K562 (cell line): ENCODE measurements at regions of chr2 and their contacts with region 1.

Region 1: DNA sequence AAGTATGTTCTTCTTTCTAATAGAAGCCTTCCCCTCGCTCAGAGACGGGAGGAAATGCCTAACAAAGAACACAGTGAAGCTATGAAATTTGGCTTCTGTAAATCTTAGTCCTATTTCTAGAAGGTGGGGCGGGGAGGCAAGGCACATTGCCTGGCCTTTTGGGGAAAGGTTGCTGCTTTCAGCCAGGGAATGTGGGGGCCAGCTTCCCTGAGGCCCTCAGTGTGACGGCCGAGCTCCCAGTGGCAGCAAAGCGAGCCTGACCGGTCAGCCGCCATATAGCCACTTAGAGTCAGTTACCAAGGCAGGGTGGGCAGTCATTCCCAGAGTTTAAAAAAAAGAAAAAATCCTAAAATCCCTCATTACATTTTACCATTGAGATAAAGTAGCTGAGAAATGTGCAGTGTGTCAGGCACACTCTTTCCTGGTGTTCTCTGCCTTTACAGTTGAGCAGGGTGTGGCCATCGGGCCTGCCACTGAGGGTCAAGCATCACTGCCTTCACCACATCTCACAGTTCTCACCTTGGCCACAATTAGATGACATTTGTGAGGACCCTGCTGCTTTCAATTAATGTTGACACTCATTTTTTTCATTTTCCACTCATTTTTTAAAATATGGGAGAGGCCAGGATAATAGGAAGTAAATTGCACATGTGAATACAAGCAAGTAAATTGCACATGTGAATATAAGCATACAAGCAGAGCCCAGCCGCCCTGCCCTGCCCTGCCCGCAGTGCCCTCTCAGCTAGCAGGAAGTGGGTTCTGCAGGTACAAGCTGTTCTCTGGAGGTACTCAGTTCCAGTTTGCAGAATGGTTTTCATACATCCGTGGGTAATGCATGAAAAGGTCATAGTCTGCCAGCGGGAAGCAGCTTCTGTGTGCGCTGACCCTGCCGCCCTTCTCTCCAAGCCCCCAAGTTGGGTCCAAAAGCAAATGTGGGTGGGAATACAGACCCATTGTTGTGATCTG is 76.9 kb downstream of the WDSUB1 start:
- DNase-seq: no peak
- ATAC-seq: no peak
- H3K4me3 ChIP-seq: no peak overlapping the region
- H3K27ac ChIP-seq: no peak overlapping the region
- H3K4me1 ChIP-seq: no peaks in the 10 kb centered on the region
- H3K27me3 ChIP-seq: peaks cover 34 to 60% of the 10 kb centered on the region in 2 experiments
- CTCF ChIP-seq: no peak
- EP300 ChIP-seq: no peak
- POLR2A ChIP-seq: no peak
- RAD21 ChIP-seq: no peak

Region 2: GRCh38 chr2:159228081-159228581 is 18.5 kb after region 1 on chr2:
- CTCF ChIA-PET with region 1: no interaction called
- POLR2A ChIA-PET with region 1: no interaction called
- in situ Hi-C with region 1: no loop called
- intact Hi-C with region 1: no loop called
- DNase-seq: no peak
- ATAC-seq: no peak
- H3K4me3 ChIP-seq: no peak overlapping the region
- H3K27ac ChIP-seq: no peak overlapping the region
- H3K4me1 ChIP-seq: peaks cover 6 to 7% of the 10 kb centered on the region in 2 experiments
- H3K27me3 ChIP-seq: no peaks in the 10 kb centered on the region
- CTCF ChIP-seq: no peak
- EP300 ChIP-seq: no peak
- POLR2A ChIP-seq: no peak
- RAD21 ChIP-seq: no peak

Region 3: GRCh38 chr2:159256159-159256558 is 46.5 kb after region 1 on chr2:
- CTCF ChIA-PET with region 1: no interaction called
- POLR2A ChIA-PET with region 1: no interaction called
- in situ Hi-C with region 1: no loop called
- intact Hi-C with region 1: no loop called
- DNase-seq: no peak
- ATAC-seq: no peak
- H3K4me3 ChIP-seq: no peak overlapping the region
- H3K27ac ChIP-seq: no peak overlapping the region
- H3K4me1 ChIP-seq: no peaks in the 10 kb centered on the region
- H3K27me3 ChIP-seq: no peaks in the 10 kb centered on the region
- CTCF ChIP-seq: no peak
- EP300 ChIP-seq: no peak
- POLR2A ChIP-seq: no peak
- RAD21 ChIP-seq: no peak

Region 4: DNA sequence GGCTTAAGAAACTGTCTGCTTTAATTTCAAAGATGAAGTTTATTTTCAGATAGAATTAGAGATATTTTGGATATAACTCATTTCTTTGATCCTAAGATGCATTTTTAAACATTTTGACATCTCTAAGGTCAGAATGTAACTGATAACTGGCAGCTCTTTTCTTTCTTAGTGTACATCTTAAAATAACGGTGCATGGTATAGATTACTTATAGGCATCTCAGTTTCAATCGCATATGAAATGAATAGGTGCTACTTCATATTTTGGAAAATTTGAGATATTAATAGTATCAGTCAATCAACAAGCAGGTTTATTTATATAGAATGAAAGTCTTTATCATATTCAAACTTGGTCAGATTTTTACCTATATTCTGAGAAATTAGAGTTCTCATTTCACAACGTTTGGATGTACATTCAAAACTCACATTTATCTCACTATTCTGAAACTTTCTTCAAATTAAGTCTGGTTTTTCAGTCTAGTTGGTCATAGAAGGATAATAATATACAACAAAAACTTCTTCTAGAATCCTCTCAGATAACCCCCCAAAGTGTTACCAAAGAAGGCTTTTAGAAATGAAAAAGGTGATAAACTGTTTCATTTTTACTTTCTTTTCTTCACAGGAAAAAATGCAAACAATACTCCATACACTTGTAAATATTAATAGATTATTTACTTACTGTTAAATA is 199.6 kb after region 1 on chr2:
- CTCF ChIA-PET with region 1: no interaction called
- POLR2A ChIA-PET with region 1: no interaction called
- in situ Hi-C with region 1: no loop called
- intact Hi-C with region 1: no loop called
- DNase-seq: no peak
- ATAC-seq: no peak
- H3K4me3 ChIP-seq: no peak overlapping the region
- H3K27ac ChIP-seq: no peak overlapping the region
- H3K4me1 ChIP-seq: no peaks in the 10 kb centered on the region
- H3K27me3 ChIP-seq: no peaks in the 10 kb centered on the region
- CTCF ChIP-seq: no peak
- EP300 ChIP-seq: no peak
- POLR2A ChIP-seq: no peak
- RAD21 ChIP-seq: no peak

Region 5: DNA sequence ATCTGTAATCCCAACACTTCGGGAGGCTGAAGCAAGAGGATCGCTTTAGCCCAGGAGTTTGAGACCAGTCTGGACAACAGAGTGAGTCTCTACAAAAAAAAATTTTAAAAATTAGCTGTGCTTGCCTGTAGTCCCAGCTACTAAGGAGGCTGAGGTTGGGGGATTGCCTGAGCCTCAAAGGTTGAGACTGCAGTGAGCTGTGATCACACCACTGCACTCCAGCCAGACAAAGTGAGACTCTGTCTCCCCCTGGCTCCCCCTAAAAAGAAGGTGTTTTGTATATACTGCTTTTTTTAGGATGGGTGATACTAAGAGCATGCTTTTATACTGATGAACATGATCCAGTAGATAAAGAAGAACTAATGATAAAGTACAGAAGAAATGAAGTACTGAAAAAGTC is 261.7 kb after region 1 on chr2:
- CTCF ChIA-PET with region 1: no interaction called
- POLR2A ChIA-PET with region 1: no interaction called
- in situ Hi-C with region 1: no loop called
- intact Hi-C with region 1: loop called (anchors 5 kb)
- DNase-seq: no peak
- ATAC-seq: peak; percentile 58; the same call in 2 of the 3 replicates
- H3K4me3 ChIP-seq: no peak overlapping the region
- H3K27ac ChIP-seq: no peak overlapping the region
- H3K4me1 ChIP-seq: peaks cover 0 to 14% of the 10 kb centered on the region in 2 experiments; a peak in 3 of 5 replicates
- H3K27me3 ChIP-seq: no peaks in the 10 kb centered on the region
- CTCF ChIP-seq: peak; percentile 8 to 14 (median 11); a peak in 1 of 6 replicates
- EP300 ChIP-seq: no peak
- POLR2A ChIP-seq: no peak
- RAD21 ChIP-seq: peak in 1 of 2 experiments; percentile 17; a peak in 1 of 4 replicates